ENCODE measurements at regions of chr9 and their contacts with region 1.

Region 1: DNA sequence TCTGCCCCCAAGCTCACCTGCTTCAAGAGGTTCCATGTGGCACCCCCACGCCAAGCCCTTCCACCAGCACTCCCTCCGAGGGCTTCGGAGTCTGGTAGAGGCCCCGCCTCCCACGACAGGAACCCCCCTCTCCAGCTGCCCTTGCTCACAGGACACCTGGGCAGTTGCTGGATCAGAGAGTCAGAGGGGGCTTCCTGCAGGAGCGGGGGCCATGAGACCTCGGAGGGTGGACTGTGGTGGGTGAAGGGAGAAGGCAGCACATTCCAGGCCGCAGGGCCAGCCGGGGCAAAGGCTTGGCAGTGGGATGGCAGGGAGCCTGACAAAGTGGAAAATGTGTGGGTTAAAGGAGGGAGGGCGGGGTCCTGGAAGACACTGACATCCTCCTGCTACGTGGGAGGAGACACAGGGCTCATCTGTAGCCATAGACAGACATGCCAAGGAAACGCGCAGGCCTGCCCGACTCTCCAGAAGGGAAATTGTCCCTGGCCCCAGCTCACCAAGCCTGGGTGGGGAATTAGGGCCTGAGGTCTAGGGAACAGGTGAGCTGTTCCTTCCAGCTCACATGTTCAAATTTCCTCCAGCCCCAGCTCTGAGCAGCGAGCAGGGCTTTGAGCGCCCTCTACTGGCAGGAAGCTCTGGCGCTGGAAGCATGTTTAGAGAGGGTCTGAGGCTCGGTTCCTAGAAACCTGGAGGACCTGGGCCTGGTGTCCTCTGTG is 74.2 kb downstream of the NTNG2 start:
- DNase-seq: peak; percentile 76
- H3K4me3 ChIP-seq: no peak overlapping the region
- H3K27ac ChIP-seq: no peak overlapping the region
- H3K4me1 ChIP-seq: no peaks in the 10 kb centered on the region
- H3K27me3 ChIP-seq: no peaks in the 10 kb centered on the region
- CTCF ChIP-seq: peak; percentile 94

Region 2: GRCh38 chr9:131762356-131762932 is 473.7 kb before region 1 on chr9:
- intact Hi-C with region 1: loop called (anchors 5 kb)
- DNase-seq: peak; percentile 62
- H3K4me3 ChIP-seq: no peak overlapping the region
- H3K27ac ChIP-seq: no peak overlapping the region
- H3K4me1 ChIP-seq: no peaks in the 10 kb centered on the region
- H3K27me3 ChIP-seq: no peaks in the 10 kb centered on the region
- CTCF ChIP-seq: peak; percentile 93

Region 3: DNA sequence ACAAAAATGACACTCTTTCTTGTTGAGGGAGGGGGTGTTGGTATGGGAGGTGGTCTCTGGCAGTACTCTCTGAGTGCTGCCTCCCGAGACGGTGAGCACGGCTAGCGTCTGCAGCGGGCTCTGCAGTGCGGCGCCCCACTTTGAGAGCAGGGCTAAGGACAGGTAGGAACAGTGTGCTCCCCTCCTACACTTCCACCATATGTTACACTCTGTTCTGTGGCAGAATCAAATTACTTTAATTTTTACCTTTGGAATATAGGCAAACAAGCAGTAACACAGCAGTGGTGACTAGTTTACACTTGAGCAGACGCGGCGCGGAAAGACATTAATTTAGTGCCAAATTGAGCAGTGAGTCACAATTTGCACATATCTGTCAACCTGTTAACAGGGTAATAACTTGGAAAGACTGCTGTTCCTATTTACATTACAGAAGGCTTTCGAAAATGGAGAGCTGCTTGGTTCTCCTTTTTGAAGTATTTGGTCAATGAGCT is 292.7 kb before region 1 on chr9:
- intact Hi-C with region 1: no loop called
- DNase-seq: no peak
- H3K4me3 ChIP-seq: no peak overlapping the region
- H3K27ac ChIP-seq: no peak overlapping the region
- H3K4me1 ChIP-seq: no peaks in the 10 kb centered on the region
- H3K27me3 ChIP-seq: no peaks in the 10 kb centered on the region
- CTCF ChIP-seq: no peak

Region 4: DNA sequence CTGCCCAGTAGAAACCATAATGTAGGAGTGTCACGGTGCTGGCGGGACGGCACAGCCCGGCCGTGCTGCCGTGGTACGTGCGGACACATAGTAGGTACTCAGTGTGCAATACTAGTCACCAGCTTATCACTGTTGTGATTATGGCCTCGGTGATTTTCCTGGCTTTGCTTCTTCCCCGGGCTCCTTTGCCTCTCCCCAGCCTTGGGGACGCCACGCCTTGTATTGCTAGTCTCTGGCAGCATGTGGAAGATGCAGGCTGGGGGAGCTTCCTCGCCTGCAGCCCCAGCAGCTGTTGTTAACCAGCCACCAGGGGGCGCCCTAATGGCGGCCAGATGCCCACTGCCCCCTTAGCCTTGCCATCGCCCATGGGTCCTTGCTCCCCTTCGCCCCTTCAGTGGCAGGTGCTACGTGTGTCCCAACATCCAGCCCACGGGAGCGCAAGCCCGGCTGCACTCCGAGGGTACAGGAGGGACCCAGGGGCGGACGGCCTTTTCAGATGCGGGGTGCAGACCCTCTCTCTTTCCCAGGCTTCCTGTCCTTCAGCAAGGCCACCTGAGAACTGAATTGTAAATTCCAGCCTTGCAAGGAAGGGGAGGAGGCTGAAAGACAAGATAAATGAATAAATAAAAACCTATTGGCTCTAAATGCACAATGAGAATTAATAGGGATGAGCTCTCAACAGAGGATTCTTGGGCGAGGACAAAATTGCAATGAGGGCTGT is 66.3 kb before region 1 on chr9:
- intact Hi-C with region 1: loop called (anchors 5 kb)
- DNase-seq: peak; percentile 26
- H3K4me3 ChIP-seq: no peak overlapping the region
- H3K27ac ChIP-seq: no peak overlapping the region
- H3K4me1 ChIP-seq: no peaks in the 10 kb centered on the region
- H3K27me3 ChIP-seq: peaks cover 14% of the 10 kb centered on the region
- CTCF ChIP-seq: peak; percentile 69

Region 5: GRCh38 chr9:132644251-132644650 is 408.1 kb after region 1 on chr9:
- intact Hi-C with region 1: no loop called
- DNase-seq: no peak
- H3K4me3 ChIP-seq: no peak overlapping the region
- H3K27ac ChIP-seq: no peak overlapping the region
- H3K4me1 ChIP-seq: no peaks in the 10 kb centered on the region
- H3K27me3 ChIP-seq: no peaks in the 10 kb centered on the region
- CTCF ChIP-seq: no peak

Measured in colonic mucosa (tissue), 4 donors.